Heart left ventricle (tissue), 16 donors: ENCODE measurements at regions of chr6 and their contacts with region 1.

Region 1: GRCh38 chr6:99568103-99568933 is at the start of gene CCNC:
- DNase-seq: peak; percentile 91 to 96 (median 95)
- ATAC-seq: peak; percentile 94 to 100 (median 100)
- H3K4me3 ChIP-seq: peak within 1 kb of the TSS; percentile 49 to 96 (median 86)
- H3K27ac ChIP-seq: peak within 1 kb of the TSS; percentile 21 to 88 (median 81)
- H3K4me1 ChIP-seq: peaks cover 0 to 39% (median 19%) of the 10 kb centered on the region in 12 donors
- H3K27me3 ChIP-seq: no peaks in the 10 kb centered on the region
- CTCF ChIP-seq: peak in 1 of 12 donors; percentile 14
- POLR2A ChIP-seq: peak in 1 of 2 donors; percentile 59
- total RNA-seq, gene CCNC: 13.8 to 24.2 (median 17.9) TPM

Region 2: DNA sequence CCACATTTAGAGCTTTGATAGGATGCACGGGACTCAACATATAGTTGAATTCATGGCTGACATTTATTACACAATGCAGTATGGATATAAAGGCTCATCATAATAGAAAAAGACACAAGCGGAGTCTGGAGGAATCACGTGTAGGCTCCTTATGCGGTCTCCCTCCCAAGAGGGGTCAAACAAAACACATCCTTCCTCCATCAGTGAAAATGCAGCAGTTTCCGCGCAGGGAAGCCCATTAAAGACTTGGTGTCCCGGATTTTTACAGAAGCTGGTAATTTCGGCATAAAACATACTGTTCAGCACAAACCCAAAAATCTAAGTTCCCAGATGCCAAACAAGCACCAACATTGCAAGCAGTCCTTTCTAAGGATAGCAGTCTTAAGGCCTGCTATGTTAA is 54.2 kb before region 1 on chr6:
- intact Hi-C with region 1: loop called in 2 of 10 experiments (anchors 5 to 10 kb)
- DNase-seq: no peak
- ATAC-seq: no peak
- H3K4me3 ChIP-seq: peak overlapping the region in 9 of 12 donors; percentile 65 to 97 (median 93)
- H3K27ac ChIP-seq: peak overlapping the region in 5 of 12 donors; percentile 6 to 96 (median 91)
- H3K4me1 ChIP-seq: peaks cover 0 to 22% (median 13%) of the 10 kb centered on the region in 12 donors
- H3K27me3 ChIP-seq: no peaks in the 10 kb centered on the region
- CTCF ChIP-seq: no peak
- POLR2A ChIP-seq: no peak

Region 3: DNA sequence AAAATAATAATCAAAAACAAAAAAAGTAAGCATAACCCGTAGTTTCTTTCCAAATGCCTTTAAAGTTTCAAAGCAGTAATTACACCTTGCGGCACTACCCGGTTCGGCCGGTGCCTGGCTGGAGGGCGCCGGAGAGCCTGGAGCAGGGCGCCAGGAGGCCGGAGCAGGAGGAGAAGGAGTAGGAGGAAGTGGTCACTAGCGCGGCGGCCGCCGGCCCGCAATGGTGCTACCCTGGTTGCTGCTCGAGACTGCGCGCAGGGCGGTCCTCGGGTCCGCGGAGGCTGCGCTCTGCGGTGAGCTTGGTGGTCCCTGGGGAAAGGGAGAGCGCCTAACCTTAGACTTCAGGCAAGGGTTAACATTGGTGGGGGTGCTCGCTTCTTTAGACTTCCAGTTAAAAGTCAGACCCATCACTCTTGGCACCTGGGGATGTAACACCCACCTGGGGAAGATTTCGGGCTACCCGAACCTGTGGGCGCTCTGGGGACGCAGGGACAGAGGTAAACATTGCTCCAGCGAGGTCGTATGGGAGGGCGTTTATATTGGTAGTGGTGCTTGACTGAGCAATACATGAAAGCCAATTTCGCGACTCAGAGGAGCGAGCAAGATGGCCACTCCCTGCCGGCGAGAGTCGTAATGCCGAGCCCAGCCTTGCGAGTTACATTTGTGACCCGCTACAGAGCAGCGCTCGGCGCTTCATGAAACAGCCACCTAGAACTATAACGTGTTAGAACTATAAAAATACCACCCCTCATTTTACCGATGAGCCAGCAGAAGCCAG is 47.3 kb before region 1 on chr6:
- intact Hi-C with region 1: loop called in 8 of 10 experiments (anchors 1 to 10 kb)
- DNase-seq: peak; percentile 85 to 92 (median 89)
- ATAC-seq: peak; percentile 97 to 99 (median 98)
- H3K4me3 ChIP-seq: peak overlapping the region; percentile 34 to 93 (median 76)
- H3K27ac ChIP-seq: peak overlapping the region; percentile 40 to 93 (median 90)
- H3K4me1 ChIP-seq: peaks cover 0 to 32% (median 6%) of the 10 kb centered on the region in 12 donors
- H3K27me3 ChIP-seq: no peaks in the 10 kb centered on the region
- CTCF ChIP-seq: peak; percentile 73 to 96 (median 89)
- POLR2A ChIP-seq: peak in 1 of 2 donors; percentile 89